ENCODE measurements at regions of chr2 and their contacts with region 1.

Region 1: GRCh38 chr2:102520028-102520427 is 47.0 kb downstream of the SLC9A4 start:
- DNase-seq: no peak
- H3K4me3 Mint-ChIP-seq: no peak overlapping the region
- H3K27ac Mint-ChIP-seq: no peak overlapping the region
- H3K4me1 Mint-ChIP-seq: no peaks in the 10 kb centered on the region
- H3K27me3 Mint-ChIP-seq: peaks cover 1% of the 10 kb centered on the region

Region 2: GRCh38 chr2:102181919-102182635 is 338.0 kb before region 1 on chr2:
- intact Hi-C with region 1: no loop called
- DNase-seq: peak; percentile 43
- H3K4me3 Mint-ChIP-seq: no peak overlapping the region
- H3K27ac Mint-ChIP-seq: no peak overlapping the region
- H3K4me1 Mint-ChIP-seq: peaks cover 4% of the 10 kb centered on the region
- H3K27me3 Mint-ChIP-seq: peaks cover 23% of the 10 kb centered on the region

Region 3: DNA sequence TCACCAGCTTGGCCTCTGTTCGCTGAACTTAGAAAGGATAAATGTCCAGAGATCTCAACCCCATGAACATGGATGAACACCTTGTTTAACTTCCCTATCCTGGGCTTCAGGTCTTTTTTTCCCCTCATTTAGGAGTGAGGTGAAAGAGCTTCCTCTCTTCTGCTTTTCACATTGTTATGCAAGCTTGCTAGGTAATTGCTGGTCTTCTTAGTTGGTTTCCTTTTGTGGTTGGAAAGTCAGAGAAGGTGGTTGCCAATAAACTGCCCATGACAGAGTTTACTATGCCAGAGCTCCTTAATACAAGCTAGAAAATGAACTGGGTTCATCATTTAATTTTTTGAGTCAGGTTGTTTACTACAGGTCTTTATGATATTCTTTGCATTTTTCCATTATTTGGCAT is 30.4 kb before region 1 on chr2:
- intact Hi-C with region 1: no loop called
- DNase-seq: no peak
- H3K4me3 Mint-ChIP-seq: no peak overlapping the region
- H3K27ac Mint-ChIP-seq: no peak overlapping the region
- H3K4me1 Mint-ChIP-seq: peaks cover 6% of the 10 kb centered on the region
- H3K27me3 Mint-ChIP-seq: peaks cover 30% of the 10 kb centered on the region

Region 4: DNA sequence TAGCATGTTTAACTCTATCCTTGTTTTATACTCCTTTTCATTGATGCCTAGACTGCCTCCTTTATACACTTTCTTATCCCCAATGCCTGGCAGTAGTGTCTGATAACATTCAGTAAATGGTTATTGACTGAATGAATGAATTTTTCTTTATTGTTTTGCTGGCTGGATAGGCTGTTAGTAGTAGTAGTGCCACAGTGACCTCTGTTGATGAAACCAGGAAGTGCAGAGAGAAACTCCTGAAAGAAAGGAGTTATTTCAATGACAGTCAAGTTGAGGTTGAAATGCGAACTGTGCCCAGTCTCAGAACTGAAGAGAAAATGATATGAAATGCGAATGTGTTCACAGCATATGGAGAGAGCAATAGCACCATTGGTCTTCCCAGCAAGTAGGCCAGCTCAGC is 72.6 kb after region 1 on chr2:
- intact Hi-C with region 1: loop called (anchors 5 kb)
- DNase-seq: peak; percentile 68
- H3K4me3 Mint-ChIP-seq: no peak overlapping the region
- H3K27ac Mint-ChIP-seq: no peak overlapping the region
- H3K4me1 Mint-ChIP-seq: no peaks in the 10 kb centered on the region
- H3K27me3 Mint-ChIP-seq: peaks cover 15% of the 10 kb centered on the region

Region 5: DNA sequence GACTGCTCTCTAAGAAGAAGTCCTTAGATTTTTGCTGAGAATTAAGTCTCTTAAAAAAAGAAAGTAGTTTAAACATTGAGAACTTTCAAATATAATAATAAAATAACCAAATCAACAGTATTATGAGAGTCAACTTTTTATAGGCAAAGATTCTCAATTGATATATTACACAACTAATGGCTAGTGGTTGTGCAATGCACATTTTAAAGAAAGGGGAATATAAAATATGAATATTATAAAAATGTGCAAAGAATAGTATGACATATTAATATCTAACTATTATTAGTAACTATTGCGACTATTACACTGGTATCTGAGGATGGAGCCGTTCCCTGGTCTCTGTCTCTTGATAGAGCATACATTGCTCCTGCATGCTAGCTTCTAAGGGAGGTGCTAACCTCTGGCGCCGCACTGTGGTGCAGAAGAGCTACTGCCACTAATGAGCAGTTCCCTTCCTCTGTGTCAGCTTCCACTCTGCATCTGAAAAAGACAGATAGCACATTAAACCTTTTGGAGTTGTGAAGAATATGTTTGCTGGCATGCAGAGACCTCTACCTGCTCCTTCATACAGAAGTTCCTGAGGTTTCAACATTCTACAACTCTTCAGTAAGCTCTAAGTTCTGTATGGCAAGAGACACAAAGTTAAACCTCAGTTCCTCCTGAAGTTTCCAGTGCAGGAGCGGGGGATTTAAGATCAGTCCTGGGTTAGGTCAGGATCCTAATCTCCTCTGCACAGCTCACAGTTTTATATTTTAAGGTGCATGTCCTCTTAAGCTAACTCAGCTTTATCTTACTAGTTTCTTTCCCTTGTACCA is 95.8 kb after region 1 on chr2:
- intact Hi-C with region 1: loop called (anchors 5 kb)
- DNase-seq: peak; percentile 81
- H3K4me3 Mint-ChIP-seq: no peak overlapping the region
- H3K27ac Mint-ChIP-seq: no peak overlapping the region
- H3K4me1 Mint-ChIP-seq: peaks cover 11% of the 10 kb centered on the region
- H3K27me3 Mint-ChIP-seq: peaks cover 60% of the 10 kb centered on the region

Measured in activated CD4-positive, alpha-beta T cell treated with anti-CD3 and anti-CD28 coated beads, Interleukin-2, amount 10 ng/mL, durations not matched to agents 24 days and 14 days (primary cell).